ENCODE measurements at regions of chr20 and their contacts with region 1.

Region 1: GRCh38 chr20:38997622-38998021 is 35.5 kb downstream of the DHX35 start:
- DNase-seq: peak; percentile 87
- ATAC-seq: peak; percentile 99
- H3K4me3 ChIP-seq: no peak overlapping the region
- H3K27ac ChIP-seq: peak overlapping the region; percentile 49
- H3K4me1 ChIP-seq: peaks cover 14% of the 10 kb centered on the region
- H3K27me3 ChIP-seq: no peaks in the 10 kb centered on the region
- CTCF ChIP-seq: peak; percentile 49 to 63 (median 52)
- EP300 ChIP-seq: peak; percentile 45 to 59; a peak in 3 of 4 replicates
- POLR2A ChIP-seq: peak; percentile 26; the same call in 1 of the 2 replicates
- RAD21 ChIP-seq: peak; percentile 64

Region 2: GRCh38 chr20:38919683-38920082 is 77.9 kb before region 1 on chr20:
- CTCF ChIA-PET with region 1: interaction called, 13 read pairs
- POLR2A ChIA-PET with region 1: interaction called, 3 read pairs
- RAD21 ChIA-PET with region 1: interaction called, 10 read pairs
- SMC1A ChIA-PET with region 1: interaction called, 3 read pairs
- in situ Hi-C with region 1: no loop called
- intact Hi-C with region 1: no loop called
- DNase-seq: no peak
- ATAC-seq: no peak
- H3K4me3 ChIP-seq: no peak overlapping the region
- H3K27ac ChIP-seq: no peak overlapping the region
- H3K4me1 ChIP-seq: no peaks in the 10 kb centered on the region
- H3K27me3 ChIP-seq: no peaks in the 10 kb centered on the region
- CTCF ChIP-seq: no peak
- EP300 ChIP-seq: no peak
- POLR2A ChIP-seq: no peak; the same call in 1 of the 2 replicates
- RAD21 ChIP-seq: no peak

Region 3: DNA sequence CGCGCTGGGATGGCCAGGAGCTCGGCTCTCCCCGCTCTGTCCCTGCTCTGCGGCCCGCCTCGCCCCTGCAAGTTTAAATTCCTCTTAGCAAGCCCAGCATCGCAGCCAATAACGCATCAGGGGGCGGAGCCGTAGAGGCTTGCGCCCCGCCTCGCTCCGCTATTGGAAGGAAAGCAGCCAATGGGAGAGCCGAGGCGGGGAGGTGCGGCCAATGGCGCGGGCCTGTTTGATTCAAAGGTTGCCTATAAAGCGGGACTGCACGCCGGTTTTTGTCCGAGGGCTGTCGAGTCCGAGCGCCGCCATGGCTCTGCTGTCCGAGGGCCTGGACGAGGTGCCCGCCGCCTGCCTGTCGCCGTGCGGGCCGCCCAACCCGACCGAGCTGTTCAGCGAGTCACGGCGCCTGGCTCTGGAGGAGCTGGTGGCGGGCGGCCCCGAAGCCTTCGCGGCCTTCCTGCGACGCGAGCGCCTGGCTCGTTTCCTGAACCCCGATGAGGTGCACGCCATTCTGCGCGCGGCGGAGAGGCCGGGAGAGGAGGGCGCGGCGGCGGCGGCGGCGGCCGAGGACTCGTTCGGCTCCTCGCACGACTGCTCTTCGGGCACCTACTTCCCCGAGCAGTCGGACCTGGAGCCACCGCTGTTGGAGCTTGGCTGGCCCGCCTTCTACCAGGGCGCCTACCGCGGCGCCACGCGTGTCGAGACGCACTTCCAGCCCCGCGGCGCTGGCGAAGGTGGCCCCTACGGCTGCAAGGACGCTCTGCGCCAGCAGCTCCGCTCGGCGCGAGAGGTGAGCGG is 71.3 kb before region 1 on chr20 and contains the start of gene FAM83D:
- CTCF ChIA-PET with region 1: interaction called, 32 read pairs
- POLR2A ChIA-PET with region 1: interaction called, 4 read pairs
- RAD21 ChIA-PET with region 1: interaction called, 29 read pairs
- SMC1A ChIA-PET with region 1: interaction called, 31 read pairs
- in situ Hi-C with region 1: no loop called
- intact Hi-C with region 1: loop called (anchors 1 kb)
- DNase-seq: peak; percentile 92
- ATAC-seq: peak; percentile 96
- H3K4me3 ChIP-seq: peak within 1 kb of the TSS; percentile 78
- H3K27ac ChIP-seq: peak within 1 kb of the TSS; percentile 78
- H3K4me1 ChIP-seq: peaks cover 12% of the 10 kb centered on the region
- H3K27me3 ChIP-seq: no peaks in the 10 kb centered on the region
- CTCF ChIP-seq: no peak; a peak in 2 of 6 replicates
- EP300 ChIP-seq: no peak
- POLR2A ChIP-seq: peak; percentile 99
- RAD21 ChIP-seq: no peak; the same call in 1 of the 2 replicates
- polyA plus RNA-seq, gene FAM83D: 4.5 to 6.0 TPM

Region 4: GRCh38 chr20:38932457-38933120 is 65.0 kb before region 1 on chr20:
- CTCF ChIA-PET with region 1: interaction called, 32 read pairs
- POLR2A ChIA-PET with region 1: interaction called, 4 read pairs
- RAD21 ChIA-PET with region 1: interaction called, 29 read pairs
- SMC1A ChIA-PET with region 1: interaction called, 31 read pairs
- in situ Hi-C with region 1: no loop called
- intact Hi-C with region 1: no loop called
- DNase-seq: no peak
- ATAC-seq: peak; percentile 38
- H3K4me3 ChIP-seq: peak overlapping the region; percentile 55; the same call in 1 of the 2 replicates
- H3K27ac ChIP-seq: peak overlapping the region; percentile 26; the same call in 1 of the 2 replicates
- H3K4me1 ChIP-seq: peaks cover 12% of the 10 kb centered on the region
- H3K27me3 ChIP-seq: no peaks in the 10 kb centered on the region
- CTCF ChIP-seq: no peak
- EP300 ChIP-seq: no peak
- POLR2A ChIP-seq: no peak
- RAD21 ChIP-seq: no peak

Region 5: DNA sequence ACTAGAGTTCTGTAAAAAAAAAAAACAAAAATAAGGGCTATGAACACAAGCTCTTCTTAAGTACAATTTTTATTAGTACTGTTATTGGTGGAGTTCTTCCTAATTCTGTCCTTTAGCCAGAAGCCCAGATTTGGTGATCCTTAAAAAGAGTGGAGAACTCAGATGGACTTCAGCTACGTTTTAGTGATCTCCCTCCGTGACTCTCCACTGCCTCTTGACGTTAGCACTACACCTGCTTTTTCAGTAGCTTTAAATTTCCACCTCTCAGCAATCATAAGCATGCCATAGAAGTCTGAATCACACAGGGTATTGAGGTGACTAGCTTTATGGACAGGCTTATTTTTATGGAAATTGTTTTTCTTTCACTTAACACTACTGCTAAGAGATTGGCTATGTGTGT is 17.8 kb before region 1 on chr20:
- CTCF ChIA-PET with region 1: interaction called, 33 read pairs
- POLR2A ChIA-PET with region 1: interaction called, 3 read pairs
- RAD21 ChIA-PET with region 1: interaction called, 67 read pairs
- SMC1A ChIA-PET with region 1: interaction called, 93 read pairs
- in situ Hi-C with region 1: no loop called
- intact Hi-C with region 1: no loop called
- DNase-seq: no peak
- ATAC-seq: no peak
- H3K4me3 ChIP-seq: no peak overlapping the region
- H3K27ac ChIP-seq: no peak overlapping the region
- H3K4me1 ChIP-seq: no peaks in the 10 kb centered on the region
- H3K27me3 ChIP-seq: no peaks in the 10 kb centered on the region
- CTCF ChIP-seq: no peak
- EP300 ChIP-seq: no peak
- POLR2A ChIP-seq: no peak
- RAD21 ChIP-seq: no peak

Region 6: GRCh38 chr20:38985603-38986170 is 11.9 kb before region 1 on chr20:
- CTCF ChIA-PET with region 1: interaction called, 33 read pairs
- POLR2A ChIA-PET with region 1: interaction called, 28 read pairs
- RAD21 ChIA-PET with region 1: interaction called, 67 read pairs
- SMC1A ChIA-PET with region 1: interaction called, 93 read pairs
- in situ Hi-C with region 1: no loop called
- intact Hi-C with region 1: no loop called
- DNase-seq: peak; percentile 20
- ATAC-seq: peak; percentile 58
- H3K4me3 ChIP-seq: no peak overlapping the region
- H3K27ac ChIP-seq: peak overlapping the region; percentile 17
- H3K4me1 ChIP-seq: peaks cover 34% of the 10 kb centered on the region
- H3K27me3 ChIP-seq: no peaks in the 10 kb centered on the region
- CTCF ChIP-seq: no peak
- EP300 ChIP-seq: no peak
- POLR2A ChIP-seq: no peak
- RAD21 ChIP-seq: no peak

Region 7: GRCh38 chr20:39019805-39020325 is 22.2 kb after region 1 on chr20:
- CTCF ChIA-PET with region 1: interaction called, 8 read pairs
- POLR2A ChIA-PET with region 1: interaction called, 15 read pairs
- RAD21 ChIA-PET with region 1: interaction called, 16 read pairs
- SMC1A ChIA-PET with region 1: interaction called, 18 read pairs
- in situ Hi-C with region 1: no loop called
- intact Hi-C with region 1: loop called (anchors 2 kb)
- DNase-seq: peak; percentile 79
- ATAC-seq: peak; percentile 92
- H3K4me3 ChIP-seq: peak overlapping the region; percentile 29; the same call in 1 of the 2 replicates
- H3K27ac ChIP-seq: peak overlapping the region; percentile 53
- H3K4me1 ChIP-seq: peaks cover 41% of the 10 kb centered on the region
- H3K27me3 ChIP-seq: no peaks in the 10 kb centered on the region
- CTCF ChIP-seq: no peak
- EP300 ChIP-seq: peak; percentile 44 to 65; a peak in 2 of 4 replicates
- POLR2A ChIP-seq: no peak
- RAD21 ChIP-seq: no peak

Measured in GM12878 (cell line).